ENCODE measurements at regions of chr2 and their contacts with region 1.

Region 1: GRCh38 chr2:34143149-34143548 is 544.0 kb upstream of the FAM98A start:
- DNase-seq: no peak
- ATAC-seq: no peak
- H3K4me3 ChIP-seq: no peak overlapping the region
- H3K27ac ChIP-seq: no peak overlapping the region
- H3K4me1 ChIP-seq: no peaks in the 10 kb centered on the region
- H3K27me3 ChIP-seq: no peaks in the 10 kb centered on the region
- CTCF ChIP-seq: no peak

Region 2: GRCh38 chr2:34153484-34153883 is 10.3 kb after region 1 on chr2:
- intact Hi-C with region 1: loop called in 1 of 2 experiments (anchors 1 kb)
- DNase-seq: no peak
- ATAC-seq: no peak
- H3K4me3 ChIP-seq: no peak overlapping the region
- H3K27ac ChIP-seq: no peak overlapping the region
- H3K4me1 ChIP-seq: no peaks in the 10 kb centered on the region
- H3K27me3 ChIP-seq: no peaks in the 10 kb centered on the region
- CTCF ChIP-seq: no peak

Region 3: DNA sequence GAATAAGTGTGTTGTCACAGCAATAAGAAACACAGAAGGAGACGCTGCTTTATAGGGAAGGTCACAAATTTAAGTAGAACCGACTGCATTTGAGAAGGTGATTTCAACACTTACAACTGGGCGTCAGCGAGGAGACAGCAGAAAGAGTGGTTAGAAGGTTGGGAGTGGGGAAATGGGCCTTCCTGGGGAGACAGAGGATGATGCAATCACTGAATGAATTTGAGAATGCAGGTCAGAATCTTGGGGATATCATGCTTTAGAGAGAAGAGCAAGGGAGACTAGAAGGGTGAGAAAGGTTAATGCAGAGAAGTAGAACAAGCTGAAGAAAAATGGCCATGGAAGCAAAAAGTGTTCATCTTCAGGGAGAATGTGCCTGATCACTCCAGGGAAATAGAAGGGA is 72.0 kb after region 1 on chr2:
- intact Hi-C with region 1: no loop called
- DNase-seq: no peak
- ATAC-seq: no peak
- H3K4me3 ChIP-seq: no peak overlapping the region
- H3K27ac ChIP-seq: no peak overlapping the region
- H3K4me1 ChIP-seq: no peaks in the 10 kb centered on the region
- H3K27me3 ChIP-seq: no peaks in the 10 kb centered on the region
- CTCF ChIP-seq: no peak